Breast epithelium (tissue), 4 donors: ENCODE measurements at regions of chr4 and their contacts with region 1.

Region 1: GRCh38 chr4:183823434-183823833 is 81.7 kb upstream of the STOX2 start:
- DNase-seq: no peak
- H3K4me3 ChIP-seq: no peak overlapping the region
- H3K27ac ChIP-seq: no peak overlapping the region
- H3K4me1 ChIP-seq: no peaks in the 10 kb centered on the region
- H3K27me3 ChIP-seq: no peaks in the 10 kb centered on the region
- CTCF ChIP-seq: no peak
- POLR2A ChIP-seq: no peak

Region 2: DNA sequence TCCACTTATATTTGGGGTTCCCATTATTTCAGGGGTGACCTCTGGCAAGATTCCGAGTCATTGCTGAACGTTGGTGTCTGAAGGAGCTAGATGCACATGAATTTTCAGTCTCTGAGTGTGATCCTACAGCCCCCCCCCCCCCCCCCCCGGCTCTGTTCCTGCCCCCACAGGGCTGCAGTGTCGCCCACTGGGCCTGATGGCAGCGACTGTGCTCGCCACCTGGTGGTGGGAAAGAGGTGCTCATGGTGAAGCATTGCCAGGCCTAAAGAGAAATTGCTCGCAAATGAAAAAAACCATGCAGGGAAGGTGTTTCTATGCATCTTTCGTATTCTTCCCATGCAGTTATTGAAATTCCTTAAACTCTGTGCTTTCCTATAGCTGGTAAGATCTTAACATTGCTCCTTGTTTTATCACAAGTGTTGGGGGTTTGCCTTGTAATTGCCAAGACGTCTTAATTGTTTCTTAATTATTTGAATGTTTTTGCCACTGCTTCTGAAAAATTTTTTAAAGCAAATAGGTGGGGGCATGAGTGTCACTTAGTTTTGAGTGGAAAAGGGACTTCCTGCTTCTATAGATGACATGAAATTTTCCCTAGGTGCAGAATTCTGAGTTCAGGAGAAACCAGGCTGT is 566.6 kb before region 1 on chr4:
- intact Hi-C with region 1: no loop called
- DNase-seq: no peak
- H3K4me3 ChIP-seq: no peak overlapping the region
- H3K27ac ChIP-seq: no peak overlapping the region
- H3K4me1 ChIP-seq: no peaks in the 10 kb centered on the region
- H3K27me3 ChIP-seq: no peaks in the 10 kb centered on the region
- CTCF ChIP-seq: peak; percentile 20 to 62 (median 37)
- POLR2A ChIP-seq: no peak

Region 3: DNA sequence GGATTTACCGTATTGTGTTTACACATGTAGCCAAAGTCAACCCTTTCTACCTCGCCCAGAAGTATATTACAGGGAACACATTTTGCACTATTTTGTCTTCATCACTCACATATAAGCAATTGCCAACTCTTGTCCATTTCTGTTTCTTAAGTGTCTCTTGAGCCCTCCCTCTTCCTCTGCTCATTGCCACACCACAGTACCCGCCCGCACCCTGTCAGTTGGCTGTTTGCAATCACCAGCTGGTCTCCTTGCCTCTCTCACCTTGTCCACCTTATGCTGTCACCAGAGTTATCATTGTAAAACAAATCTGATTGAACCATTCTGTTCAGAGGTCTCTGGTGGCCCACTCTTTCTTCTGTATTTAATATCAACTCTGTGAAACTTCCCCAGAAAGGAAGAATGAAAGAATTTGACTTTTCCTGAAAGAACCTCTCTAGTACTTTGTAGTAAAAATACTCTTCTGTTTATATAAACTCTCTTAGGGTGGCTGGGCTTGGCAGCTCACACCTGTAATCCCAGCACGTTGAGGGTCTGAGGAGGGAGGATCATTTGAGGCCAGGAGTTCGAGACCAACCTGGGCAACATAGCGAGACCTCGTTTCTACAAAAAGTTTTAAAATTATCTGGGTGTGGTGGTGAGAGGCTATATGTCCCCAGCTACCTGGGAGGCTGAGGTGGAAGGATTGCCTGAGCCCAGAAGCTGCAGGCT is 268.4 kb before region 1 on chr4:
- intact Hi-C with region 1: no loop called
- DNase-seq: no peak
- H3K4me3 ChIP-seq: no peak overlapping the region
- H3K27ac ChIP-seq: no peak overlapping the region
- H3K4me1 ChIP-seq: no peaks in the 10 kb centered on the region
- H3K27me3 ChIP-seq: no peaks in the 10 kb centered on the region
- CTCF ChIP-seq: no peak
- POLR2A ChIP-seq: no peak

Region 4: DNA sequence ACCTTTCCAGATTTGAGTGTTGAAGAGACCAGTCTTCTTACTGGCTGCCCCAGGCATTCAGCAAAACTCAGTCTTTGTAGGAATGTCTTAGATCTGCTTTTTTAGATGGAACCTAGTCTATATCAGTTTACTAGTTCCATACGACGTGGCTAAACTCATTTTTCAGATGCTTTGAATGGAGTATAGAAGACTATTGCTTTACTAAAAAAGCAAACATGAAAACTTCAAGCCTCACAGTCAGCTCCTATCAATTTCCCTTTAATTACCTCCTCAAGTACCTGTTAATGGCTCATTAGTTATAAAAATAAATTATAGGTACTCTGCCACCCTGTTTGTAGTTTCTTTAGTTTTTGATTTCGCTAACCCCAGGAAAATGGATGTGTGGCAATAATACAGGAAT is 18.7 kb after region 1 on chr4:
- intact Hi-C with region 1: loop called (anchors 1 kb)
- DNase-seq: no peak
- H3K4me3 ChIP-seq: no peak overlapping the region
- H3K27ac ChIP-seq: no peak overlapping the region
- H3K4me1 ChIP-seq: no peaks in the 10 kb centered on the region
- H3K27me3 ChIP-seq: no peaks in the 10 kb centered on the region
- CTCF ChIP-seq: no peak
- POLR2A ChIP-seq: no peak

Region 5: GRCh38 chr4:184395971-184396391 is 572.5 kb after region 1 on chr4:
- intact Hi-C with region 1: no loop called
- DNase-seq: no peak
- H3K4me3 ChIP-seq: no peak overlapping the region
- H3K27ac ChIP-seq: no peak overlapping the region
- H3K4me1 ChIP-seq: no peaks in the 10 kb centered on the region
- H3K27me3 ChIP-seq: no peaks in the 10 kb centered on the region
- CTCF ChIP-seq: no peak
- POLR2A ChIP-seq: no peak